Heart left ventricle (tissue), 16 donors: ENCODE measurements at regions of chr7 and their contacts with region 1.

Region 1: GRCh38 chr7:43647673-43648472 is 65.0 kb downstream of the STK17A start:
- DNase-seq: peak in 4 of 5 donors; percentile 48 to 75 (median 66)
- ATAC-seq: peak; percentile 55 to 83 (median 75)
- H3K4me3 ChIP-seq: peak overlapping the region in 4 of 12 donors; percentile 1 to 27 (median 8)
- H3K27ac ChIP-seq: peak overlapping the region; percentile 73 to 96 (median 88)
- H3K4me1 ChIP-seq: peaks cover 10 to 81% (median 66%) of the 10 kb centered on the region in 12 donors
- H3K27me3 ChIP-seq: no peaks in the 10 kb centered on the region
- CTCF ChIP-seq: no peak
- POLR2A ChIP-seq: no peak

Region 2: DNA sequence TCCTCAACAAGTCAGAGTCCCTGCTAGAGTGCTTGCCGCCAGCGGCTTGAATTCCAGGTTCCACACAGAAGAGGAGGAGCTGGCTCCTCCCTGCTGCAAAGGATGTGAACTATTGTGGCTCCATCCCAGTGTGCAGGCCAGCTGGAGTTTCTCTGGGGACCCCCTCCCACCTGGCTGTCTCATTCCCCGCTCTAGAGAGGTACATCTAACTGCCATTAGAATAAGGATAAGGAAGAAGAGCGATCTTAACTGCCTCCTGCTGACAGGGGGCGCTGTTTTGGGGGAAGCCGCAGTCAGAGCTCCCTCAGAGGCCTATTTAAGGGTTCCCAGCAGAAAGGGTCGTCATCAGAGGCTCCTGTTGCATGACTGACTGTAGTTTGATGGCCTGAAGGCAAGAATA is 576.3 kb before region 1 on chr7:
- intact Hi-C with region 1: no loop called
- DNase-seq: no peak
- ATAC-seq: no peak
- H3K4me3 ChIP-seq: no peak overlapping the region
- H3K27ac ChIP-seq: no peak overlapping the region
- H3K4me1 ChIP-seq: no peaks in the 10 kb centered on the region
- H3K27me3 ChIP-seq: peaks cover 0 to 30% (median 0%) of the 10 kb centered on the region in 9 donors
- CTCF ChIP-seq: peak in 4 of 12 donors; percentile 5 to 18 (median 13)
- POLR2A ChIP-seq: no peak

Region 3: DNA sequence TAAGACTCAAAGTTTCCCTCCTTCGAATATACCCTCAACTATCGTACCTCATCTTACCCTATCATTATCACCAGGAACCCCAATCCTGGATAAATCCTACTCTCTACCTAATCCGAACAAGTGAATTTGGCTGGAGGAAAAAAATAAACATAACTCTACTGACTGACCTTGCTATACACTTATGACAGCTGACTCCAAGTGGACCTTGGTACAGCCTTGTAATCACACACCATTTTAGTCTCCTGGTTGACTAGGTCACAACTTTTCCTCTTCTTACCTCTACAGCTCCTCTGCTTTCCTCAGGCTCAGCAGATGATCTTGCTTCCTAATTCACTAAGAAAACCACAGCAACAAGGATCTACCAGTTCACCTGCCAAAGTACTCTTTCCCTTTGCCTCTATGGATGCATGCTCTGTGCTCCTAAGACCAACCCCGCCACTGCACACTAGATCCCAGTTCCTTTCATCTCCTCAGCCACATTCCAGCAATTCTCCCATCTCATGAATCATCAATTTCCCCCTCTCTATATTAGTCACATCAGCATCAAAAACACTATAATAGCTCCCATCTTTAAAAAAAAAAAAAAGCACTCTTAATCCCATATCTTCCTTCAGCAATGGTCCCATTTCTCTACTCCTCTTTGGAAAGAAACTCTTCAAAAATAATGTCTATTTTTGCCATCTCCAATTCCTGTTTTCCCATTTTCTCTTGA is 46.0 kb after region 1 on chr7:
- intact Hi-C with region 1: loop called in 2 of 10 experiments (anchors 5 to 10 kb)
- DNase-seq: no peak
- ATAC-seq: no peak
- H3K4me3 ChIP-seq: no peak overlapping the region
- H3K27ac ChIP-seq: no peak overlapping the region
- H3K4me1 ChIP-seq: peaks cover 0 to 19% (median 0%) of the 10 kb centered on the region in 12 donors
- H3K27me3 ChIP-seq: no peaks in the 10 kb centered on the region
- CTCF ChIP-seq: no peak
- POLR2A ChIP-seq: no peak

Region 4: GRCh38 chr7:43700059-43700501 is 52.2 kb after region 1 on chr7:
- intact Hi-C with region 1: loop called in 3 of 10 experiments (anchors 5 to 10 kb)
- DNase-seq: no peak
- ATAC-seq: peak in 3 of 4 donors; percentile 44 to 73 (median 72)
- H3K4me3 ChIP-seq: no peak overlapping the region
- H3K27ac ChIP-seq: no peak overlapping the region
- H3K4me1 ChIP-seq: peaks cover 0 to 19% (median 4%) of the 10 kb centered on the region in 12 donors
- H3K27me3 ChIP-seq: no peaks in the 10 kb centered on the region
- CTCF ChIP-seq: peak; percentile 58 to 90 (median 70)
- POLR2A ChIP-seq: no peak